PC-9 (cell line): ENCODE measurements at regions of chr9 and their contacts with region 1.

Region 1: GRCh38 chr9:136625101-136626060 is 37.3 kb upstream of the EGFL7 start:
- DNase-seq: peak in 1 of 2 experiments; percentile 75
- H3K4me3 ChIP-seq: no peak overlapping the region
- H3K27ac ChIP-seq: no peak overlapping the region
- H3K4me1 ChIP-seq: no peaks in the 10 kb centered on the region
- H3K27me3 ChIP-seq: no peaks in the 10 kb centered on the region
- CTCF ChIP-seq: peak; percentile 35; the same call in 1 of the 2 replicates

Region 2: GRCh38 chr9:136267261-136268111 is 357.9 kb before region 1 on chr9:
- CTCF ChIA-PET with region 1: no interaction called
- POLR2A ChIA-PET with region 1: interaction called, 14 read pairs
- intact Hi-C with region 1: no loop called
- DNase-seq: peak; percentile 57 to 83
- H3K4me3 ChIP-seq: peak overlapping the region; percentile 63
- H3K27ac ChIP-seq: no peak overlapping the region
- H3K4me1 ChIP-seq: no peaks in the 10 kb centered on the region; the same call in 1 of the 2 replicates
- H3K27me3 ChIP-seq: peaks cover 47% of the 10 kb centered on the region
- CTCF ChIP-seq: no peak; the same call in 1 of the 2 replicates

Region 3: DNA sequence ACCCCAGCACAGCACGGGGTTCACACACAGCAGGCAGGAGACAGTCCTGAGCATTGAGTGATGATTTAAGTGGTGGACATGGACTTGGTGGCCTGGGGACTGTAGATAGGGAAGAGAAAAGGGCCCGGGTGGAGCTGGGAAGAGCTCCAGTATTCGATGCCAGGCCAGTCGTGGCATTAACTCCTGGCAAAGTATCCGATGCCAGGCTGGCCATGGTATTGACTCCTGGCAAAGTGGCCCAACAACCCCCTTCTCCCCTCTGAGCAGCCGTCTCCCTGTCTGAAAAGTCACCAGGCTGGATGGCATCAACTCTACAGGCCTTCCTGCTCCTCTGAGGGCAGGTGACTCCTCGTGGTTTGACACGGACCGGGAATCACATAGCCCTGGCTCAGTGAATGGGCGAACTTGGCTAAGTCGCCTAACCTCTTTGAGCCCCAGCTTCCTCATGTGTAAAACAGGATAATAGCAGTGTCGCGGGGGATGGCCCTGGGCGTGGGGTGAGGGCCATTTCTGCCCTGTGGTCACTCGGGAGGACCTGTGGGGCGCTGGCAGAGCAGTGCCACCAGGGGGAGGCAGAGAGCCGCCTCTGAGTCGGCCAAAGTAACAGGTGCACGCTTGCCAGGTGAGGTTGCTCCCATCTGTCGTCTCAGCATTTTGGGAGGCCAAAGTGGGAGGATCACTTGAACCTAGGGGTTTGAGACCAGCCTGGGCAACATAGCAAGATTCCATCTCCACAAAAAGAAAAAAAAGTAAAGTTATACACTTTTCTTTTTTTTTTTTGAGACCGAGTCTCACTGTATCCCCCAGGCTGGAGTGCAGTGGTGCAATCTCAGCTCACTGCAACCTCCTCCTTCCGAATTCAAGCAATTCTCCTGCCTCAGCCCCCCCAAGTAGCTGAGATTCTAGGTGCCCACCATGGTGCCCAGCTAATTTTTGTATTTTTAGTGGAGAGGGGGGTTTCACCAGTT is 136.8 kb before region 1 on chr9:
- CTCF ChIA-PET with region 1: interaction called, 38 read pairs
- POLR2A ChIA-PET with region 1: interaction called, 5 read pairs
- intact Hi-C with region 1: loop called (anchors 1 kb)
- DNase-seq: peak; percentile 50 to 87
- H3K4me3 ChIP-seq: no peak overlapping the region
- H3K27ac ChIP-seq: no peak overlapping the region
- H3K4me1 ChIP-seq: peaks cover 7% of the 10 kb centered on the region
- H3K27me3 ChIP-seq: no peaks in the 10 kb centered on the region
- CTCF ChIP-seq: peak; percentile 98

Region 4: GRCh38 chr9:136644598-136645351 is 19.4 kb after region 1 on chr9:
- CTCF ChIA-PET with region 1: interaction called, 11 read pairs
- POLR2A ChIA-PET with region 1: no interaction called
- intact Hi-C with region 1: no loop called
- DNase-seq: peak; percentile 65 to 86
- H3K4me3 ChIP-seq: peak overlapping the region; percentile 44; the same call in 1 of the 2 replicates
- H3K27ac ChIP-seq: no peak overlapping the region
- H3K4me1 ChIP-seq: peaks cover 16% of the 10 kb centered on the region
- H3K27me3 ChIP-seq: no peaks in the 10 kb centered on the region
- CTCF ChIP-seq: peak; percentile 95

Region 5: GRCh38 chr9:137316012-137316976 is 690.9 kb after region 1 on chr9:
- CTCF ChIA-PET with region 1: no interaction called
- POLR2A ChIA-PET with region 1: no interaction called
- intact Hi-C with region 1: no loop called
- DNase-seq: peak in 1 of 2 experiments; percentile 71
- H3K4me3 ChIP-seq: peak overlapping the region; percentile 53; the same call in 1 of the 2 replicates
- H3K27ac ChIP-seq: no peak overlapping the region
- H3K4me1 ChIP-seq: peaks cover 34% of the 10 kb centered on the region
- H3K27me3 ChIP-seq: no peaks in the 10 kb centered on the region
- CTCF ChIP-seq: no peak